Naive thymus-derived CD4-positive, alpha-beta T cell (primary cell): ENCODE measurements at regions of chr14 and their contacts with region 1.

Region 1: GRCh38 chr14:91388551-91388975 is 29.1 kb downstream of the CCDC88C start:
- DNase-seq: peak in 5 of 9 donors; percentile 29 to 64 (median 47)
- ATAC-seq: peak; percentile 74
- H3K4me3 ChIP-seq: peak overlapping the region; percentile 24
- H3K4me3 Mint-ChIP-seq: peak overlapping the region; percentile 56 to 92 (median 74)
- H3K27ac ChIP-seq: peak overlapping the region; percentile 60
- H3K27ac Mint-ChIP-seq: peak overlapping the region; percentile 12 to 93 (median 84)
- H3K4me1 ChIP-seq: peaks cover 90% of the 10 kb centered on the region in 2 donors
- H3K4me1 Mint-ChIP-seq: peaks cover 63 to 98% (median 88%) of the 10 kb centered on the region in 7 donors
- H3K27me3 ChIP-seq: no peaks in the 10 kb centered on the region
- H3K27me3 Mint-ChIP-seq: no peaks in the 10 kb centered on the region

Region 2: GRCh38 chr14:91223028-91223783 is 165.4 kb before region 1 on chr14:
- CTCF ChIA-PET with region 1: no interaction called
- POLR2A ChIA-PET with region 1: no interaction called
- intact Hi-C with region 1: no loop called
- DNase-seq: no peak
- ATAC-seq: no peak
- H3K4me3 ChIP-seq: no peak overlapping the region
- H3K4me3 Mint-ChIP-seq: peak overlapping the region in 1 of 10 donors; percentile 10
- H3K27ac ChIP-seq: no peak overlapping the region
- H3K27ac Mint-ChIP-seq: peak overlapping the region in 7 of 9 donors; percentile 2 to 74 (median 19)
- H3K4me1 ChIP-seq: peaks cover 41 to 44% of the 10 kb centered on the region in 2 donors
- H3K4me1 Mint-ChIP-seq: peaks cover 39 to 82% (median 79%) of the 10 kb centered on the region in 7 donors
- H3K27me3 ChIP-seq: no peaks in the 10 kb centered on the region
- H3K27me3 Mint-ChIP-seq: no peaks in the 10 kb centered on the region

Region 3: DNA sequence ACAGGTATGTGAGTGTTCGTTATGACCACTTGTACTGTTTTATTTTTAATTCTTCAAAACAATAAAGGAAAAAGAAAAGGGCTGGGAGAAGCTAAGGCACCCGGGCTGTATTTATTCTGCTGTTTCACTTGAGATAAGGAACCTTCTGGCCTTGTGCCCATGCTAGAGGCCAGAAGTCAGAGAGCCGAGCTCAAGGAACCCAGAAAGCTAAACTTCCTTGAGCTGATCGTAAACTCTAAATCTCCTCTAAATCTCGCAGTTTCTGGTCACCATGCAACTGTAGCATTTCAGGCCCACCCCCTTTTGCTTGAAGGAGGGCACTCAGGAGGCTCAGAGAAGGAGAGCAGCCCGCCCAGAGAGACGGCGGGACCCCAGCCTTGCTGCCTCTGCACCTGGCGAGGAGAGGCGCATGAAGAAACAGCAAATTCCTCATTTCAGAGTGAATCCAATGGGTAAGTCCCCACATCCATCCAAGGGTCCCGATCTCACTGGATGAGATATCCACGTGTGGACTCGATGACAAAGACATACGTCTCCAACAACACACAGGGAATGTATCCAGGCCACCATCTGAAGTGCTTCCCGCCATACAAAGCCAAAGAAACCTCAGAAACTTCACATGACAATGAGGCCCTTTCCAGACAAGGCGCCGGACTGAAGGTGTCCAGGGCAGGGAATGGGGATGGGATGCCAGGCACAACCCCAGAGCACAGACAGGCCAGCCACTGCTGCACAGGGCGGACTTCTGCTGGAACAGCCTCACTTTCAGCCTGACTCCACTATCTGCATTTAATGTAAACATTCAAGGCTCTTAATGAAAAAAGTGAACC is 14.4 kb after region 1 on chr14:
- CTCF ChIA-PET with region 1: interaction called, 4 read pairs
- POLR2A ChIA-PET with region 1: interaction called, 24 read pairs
- intact Hi-C with region 1: loop called in 1 of 2 experiments (anchors 2 kb)
- DNase-seq: no peak
- ATAC-seq: peak; percentile 2
- H3K4me3 ChIP-seq: peak overlapping the region; percentile 21
- H3K4me3 Mint-ChIP-seq: peak overlapping the region; percentile 64 to 92 (median 84)
- H3K27ac ChIP-seq: peak overlapping the region; percentile 95
- H3K27ac Mint-ChIP-seq: peak overlapping the region; percentile 71 to 99 (median 95)
- H3K4me1 ChIP-seq: peaks cover 86 to 90% of the 10 kb centered on the region in 2 donors
- H3K4me1 Mint-ChIP-seq: peaks cover 85 to 97% (median 90%) of the 10 kb centered on the region in 7 donors
- H3K27me3 ChIP-seq: no peaks in the 10 kb centered on the region
- H3K27me3 Mint-ChIP-seq: no peaks in the 10 kb centered on the region